Activated CD8-positive, alpha-beta T cell treated with anti-CD3 and anti-CD28 coated beads, Interleukin-2, amount 10 ng/mL, durations not matched to agents 7 days and 5 days (primary cell): ENCODE measurements at regions of chr13 and their contacts with region 1.

Region 1: GRCh38 chr13:31227063-31227462 is 27.3 kb downstream of the B3GLCT start:
- DNase-seq: no peak
- ATAC-seq: no peak
- H3K4me3 Mint-ChIP-seq: no peak overlapping the region
- H3K27ac Mint-ChIP-seq: no peak overlapping the region
- H3K4me1 Mint-ChIP-seq: peaks cover 9% of the 10 kb centered on the region
- H3K27me3 Mint-ChIP-seq: no peaks in the 10 kb centered on the region

Region 2: GRCh38 chr13:31035185-31035965 is 191.7 kb before region 1 on chr13:
- CTCF ChIA-PET with region 1: no interaction called
- POLR2A ChIA-PET with region 1: no interaction called
- DNase-seq: no peak
- ATAC-seq: no peak
- H3K4me3 Mint-ChIP-seq: no peak overlapping the region
- H3K27ac Mint-ChIP-seq: no peak overlapping the region
- H3K4me1 Mint-ChIP-seq: peaks cover 30% of the 10 kb centered on the region
- H3K27me3 Mint-ChIP-seq: peaks cover 55% of the 10 kb centered on the region

Region 3: GRCh38 chr13:31101472-31102170 is 125.4 kb before region 1 on chr13:
- CTCF ChIA-PET with region 1: no interaction called
- POLR2A ChIA-PET with region 1: no interaction called
- DNase-seq: no peak
- ATAC-seq: no peak
- H3K4me3 Mint-ChIP-seq: no peak overlapping the region
- H3K27ac Mint-ChIP-seq: no peak overlapping the region
- H3K4me1 Mint-ChIP-seq: no peaks in the 10 kb centered on the region
- H3K27me3 Mint-ChIP-seq: peaks cover 31% of the 10 kb centered on the region

Region 4: DNA sequence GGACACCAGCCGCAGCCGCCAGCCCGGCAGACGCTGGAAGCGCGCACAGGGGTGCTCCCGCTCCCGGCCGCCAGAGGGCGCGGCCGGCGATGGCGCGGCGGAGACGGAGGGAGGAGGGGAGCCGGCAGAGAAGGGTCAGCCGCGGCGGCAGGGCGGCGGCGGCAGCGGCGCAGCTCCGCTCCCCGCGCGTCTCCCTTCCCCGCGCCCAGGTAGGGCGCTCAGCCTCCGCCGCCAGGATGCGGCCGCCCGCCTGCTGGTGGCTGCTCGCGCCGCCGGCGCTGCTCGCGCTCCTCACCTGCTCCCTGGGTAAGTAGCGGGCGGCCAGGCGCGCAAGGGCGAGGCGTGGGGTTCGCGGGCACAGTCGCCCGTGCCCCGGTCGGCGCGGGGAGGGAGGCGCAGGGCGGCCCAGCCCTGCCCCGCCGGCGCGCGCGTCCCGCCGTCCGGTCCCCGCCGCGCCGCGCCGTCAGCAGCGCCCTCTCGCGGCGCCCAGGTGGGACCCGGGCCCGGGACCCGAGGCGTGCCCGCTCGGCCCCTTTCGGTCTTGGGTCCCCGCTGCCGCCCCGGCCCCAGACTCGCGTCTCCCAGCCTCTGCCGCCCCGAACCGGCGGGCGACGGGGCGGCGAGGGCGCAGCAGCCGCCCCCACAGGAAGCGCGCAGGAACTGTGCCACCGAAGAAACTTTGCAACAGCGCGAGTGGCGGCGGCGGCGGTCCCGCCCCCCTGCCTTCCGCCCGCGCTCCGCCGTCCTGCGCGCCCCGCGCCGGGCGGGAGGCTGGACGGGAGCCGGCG is 27.0 kb before region 1 on chr13 and contains the start of gene B3GLCT:
- CTCF ChIA-PET with region 1: interaction called, 10 read pairs
- POLR2A ChIA-PET with region 1: no interaction called
- DNase-seq: peak; percentile 81
- ATAC-seq: peak; percentile 86
- H3K4me3 Mint-ChIP-seq: peak within 1 kb of the TSS; percentile 78
- H3K27ac Mint-ChIP-seq: peak within 1 kb of the TSS; percentile 83
- H3K4me1 Mint-ChIP-seq: peaks cover 25% of the 10 kb centered on the region
- H3K27me3 Mint-ChIP-seq: peaks cover 4% of the 10 kb centered on the region
- total RNA-seq, gene B3GLCT: 5.0 to 5.5 TPM

Region 5: DNA sequence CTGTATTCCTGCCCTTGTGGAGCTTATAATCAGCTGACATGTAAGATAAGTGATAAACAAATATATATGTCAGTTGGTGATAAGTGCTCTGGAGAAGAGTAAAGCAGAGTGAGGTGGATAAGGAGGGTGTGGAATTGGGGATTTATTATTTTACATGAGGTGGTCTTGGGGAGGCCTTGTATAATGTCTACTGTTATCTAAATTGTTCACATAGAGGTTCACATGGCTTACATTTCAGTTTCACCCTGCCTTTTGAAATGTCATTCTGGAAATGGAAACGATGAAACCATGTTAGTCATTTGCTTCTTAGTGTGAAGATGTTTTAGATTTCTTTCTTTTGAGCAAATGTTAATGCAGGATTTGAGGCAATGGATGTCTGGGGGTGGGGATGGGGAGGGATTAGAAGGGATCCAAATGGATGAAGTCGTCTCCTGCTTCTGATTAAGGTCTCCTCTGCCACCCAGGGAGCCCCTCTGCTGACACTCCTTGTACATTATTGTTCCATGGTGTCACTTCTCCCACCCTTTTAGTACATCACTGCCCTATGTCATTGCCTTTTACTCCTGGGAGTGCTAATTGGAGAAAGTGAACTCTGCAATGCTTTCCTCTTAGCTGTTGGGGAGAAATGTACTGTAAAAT is 13.3 kb before region 1 on chr13:
- CTCF ChIA-PET with region 1: no interaction called
- POLR2A ChIA-PET with region 1: no interaction called
- DNase-seq: peak; percentile 17
- ATAC-seq: no peak
- H3K4me3 Mint-ChIP-seq: no peak overlapping the region
- H3K27ac Mint-ChIP-seq: no peak overlapping the region
- H3K4me1 Mint-ChIP-seq: peaks cover 5% of the 10 kb centered on the region
- H3K27me3 Mint-ChIP-seq: no peaks in the 10 kb centered on the region